AG04449 (cell line): ENCODE measurements at regions of chr2 and their contacts with region 1.

Region 1: GRCh38 chr2:10832203-10832936 is 19.8 kb upstream of the PDIA6 start:
- DNase-seq: peak; percentile 7
- H3K4me3 ChIP-seq: no peak overlapping the region
- CTCF ChIP-seq: peak; percentile 96

Region 2: DNA sequence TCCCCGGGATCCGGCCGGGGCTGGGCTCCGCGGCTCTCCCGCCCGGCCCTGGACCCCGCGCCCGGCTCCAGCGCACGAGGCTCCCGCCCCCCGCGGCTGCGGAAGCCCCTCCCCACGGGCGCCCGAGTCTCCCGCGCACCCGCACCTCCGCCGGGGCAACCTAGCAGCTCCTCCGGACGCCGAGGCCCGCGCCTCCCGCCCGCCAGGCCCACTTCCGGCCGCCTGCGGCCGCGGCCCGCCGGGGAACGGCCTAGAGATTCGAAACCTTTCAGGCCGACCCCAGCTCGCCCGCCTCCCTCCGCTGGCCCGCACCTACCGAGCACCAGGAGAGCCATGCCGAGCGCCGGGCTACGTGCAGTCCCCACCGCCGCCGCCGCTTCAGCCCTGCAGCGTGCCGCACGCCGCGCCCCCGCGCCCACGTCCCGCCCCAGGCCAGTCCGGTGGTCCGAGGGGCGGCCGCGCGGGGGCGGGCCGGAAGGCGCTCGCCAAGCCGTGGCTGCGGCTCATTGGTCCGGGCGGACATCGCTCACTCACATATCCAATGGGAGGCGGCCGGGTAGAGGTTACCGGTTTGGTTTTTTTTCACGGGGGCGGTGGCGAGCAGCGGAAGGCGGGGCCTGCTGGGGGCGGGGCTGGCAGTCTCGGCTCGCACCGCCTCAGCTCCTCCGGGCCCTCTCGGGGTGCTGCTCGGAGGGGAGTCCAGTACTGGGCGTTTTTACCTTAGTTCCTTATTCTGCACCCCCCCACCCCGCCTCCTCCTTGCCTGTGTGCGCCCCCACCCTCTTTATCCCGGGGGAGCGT is 19.8 kb before region 1 on chr2 and contains the start of gene PDIA6:
- CTCF ChIA-PET with region 1: interaction called, 78 read pairs
- POLR2A ChIA-PET with region 1: no interaction called
- DNase-seq: peak; percentile 62
- H3K4me3 ChIP-seq: peak within 1 kb of the TSS; percentile 74
- CTCF ChIP-seq: no peak

Region 3: GRCh38 chr2:10844097-10844496 is 11.7 kb after region 1 on chr2:
- CTCF ChIA-PET with region 1: interaction called, 53 read pairs
- POLR2A ChIA-PET with region 1: no interaction called
- DNase-seq: no peak
- H3K4me3 ChIP-seq: no peak overlapping the region
- CTCF ChIP-seq: no peak

Region 4: DNA sequence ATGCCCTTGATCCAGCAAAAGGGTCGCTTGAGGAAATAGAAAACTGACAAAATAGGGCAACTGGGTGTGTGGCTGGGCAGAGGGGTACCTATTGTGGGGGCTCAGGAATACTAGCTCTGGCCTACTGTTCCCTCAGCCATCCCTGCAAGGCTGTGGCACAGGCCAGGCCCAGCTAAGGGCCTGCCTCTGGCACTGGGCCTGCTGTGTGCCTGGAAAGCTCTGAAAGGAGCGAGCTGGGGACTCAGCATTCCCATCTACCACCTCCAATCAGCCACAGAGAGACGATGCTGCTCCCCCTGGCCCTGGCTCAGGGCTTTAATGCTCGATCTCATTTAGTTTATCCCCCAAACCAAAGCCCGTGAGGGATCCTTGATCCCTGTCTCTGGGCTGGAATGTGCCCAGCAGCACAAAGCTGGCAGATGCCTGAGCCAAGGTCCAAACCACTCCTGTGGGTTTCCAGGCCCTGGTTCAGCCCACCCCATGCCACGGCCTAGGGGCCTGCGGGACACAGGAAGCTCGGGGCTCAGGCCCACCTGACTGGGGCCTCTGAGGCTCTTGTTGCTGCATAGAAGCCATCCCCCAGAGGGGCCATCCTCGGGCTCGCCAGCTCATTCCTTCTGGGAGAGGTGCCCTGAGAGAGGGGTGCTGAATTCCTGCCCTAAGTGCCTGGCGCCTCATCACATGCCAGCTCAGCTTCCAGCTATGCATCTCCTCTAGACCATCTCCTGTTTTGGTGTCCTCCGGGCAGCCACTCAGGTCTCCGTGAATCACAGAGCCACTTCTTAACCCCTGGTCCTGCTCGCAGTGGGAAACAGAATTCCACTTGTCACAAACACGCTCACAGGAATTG is 36.3 kb after region 1 on chr2:
- CTCF ChIA-PET with region 1: interaction called, 11 read pairs
- POLR2A ChIA-PET with region 1: no interaction called
- DNase-seq: peak; percentile 68
- H3K4me3 ChIP-seq: no peak overlapping the region
- CTCF ChIP-seq: no peak

Region 5: GRCh38 chr2:10911261-10912075 is 79.1 kb after region 1 on chr2 and contains the start of gene KCNF1:
- CTCF ChIA-PET with region 1: interaction called, 33 read pairs
- POLR2A ChIA-PET with region 1: no interaction called
- DNase-seq: no peak
- H3K4me3 ChIP-seq: peak within 1 kb of the TSS; percentile 45
- CTCF ChIP-seq: peak; percentile 38

Region 6: GRCh38 chr2:11187083-11187619 is 354.8 kb after region 1 on chr2:
- CTCF ChIA-PET with region 1: interaction called, 12 read pairs
- POLR2A ChIA-PET with region 1: no interaction called
- DNase-seq: no peak
- H3K4me3 ChIP-seq: no peak overlapping the region
- CTCF ChIP-seq: no peak